Mammary epithelial cell (primary cell): ENCODE measurements at regions of chr9 and their contacts with region 1.

Region 1: GRCh38 chr9:113807173-113808061 is 68.7 kb upstream of the ZNF618 start:
- DNase-seq: peak; percentile 43
- H3K4me3 ChIP-seq: no peak overlapping the region
- H3K27ac ChIP-seq: no peak overlapping the region
- H3K4me1 ChIP-seq: peaks cover 4% of the 10 kb centered on the region
- H3K27me3 ChIP-seq: peaks cover 1% of the 10 kb centered on the region
- CTCF ChIP-seq: peak; percentile 90 to 91

Region 2: DNA sequence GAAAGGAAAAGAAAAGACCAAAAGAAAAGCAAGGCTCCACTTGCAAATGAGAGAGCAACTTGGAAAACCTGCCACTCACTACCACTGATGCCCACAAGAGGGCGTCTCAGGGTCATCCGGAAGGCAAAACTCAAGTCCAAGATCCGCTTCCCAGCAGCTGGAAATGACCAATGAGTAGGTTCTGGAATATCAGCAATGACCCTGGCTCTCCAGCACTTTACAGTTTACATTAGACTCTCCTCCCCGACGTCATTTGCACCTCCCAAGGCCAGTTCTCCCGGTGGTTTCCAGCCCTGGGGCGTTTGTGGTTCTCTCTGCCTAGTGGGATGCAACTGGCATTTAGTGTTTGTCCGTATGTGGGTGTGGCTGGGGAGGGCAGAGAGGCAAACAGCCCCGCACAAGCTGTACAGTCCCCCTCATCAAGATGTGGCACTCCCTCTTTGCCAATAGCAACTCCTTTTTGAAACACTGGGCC is 125.1 kb before region 1 on chr9:
- CTCF ChIA-PET with region 1: no interaction called
- dilution Hi-C with region 1: no loop called
- in situ Hi-C with region 1: no loop called
- intact Hi-C with region 1: loop called (anchors 5 kb)
- DNase-seq: peak; percentile 85
- H3K4me3 ChIP-seq: no peak overlapping the region
- H3K27ac ChIP-seq: no peak overlapping the region
- H3K4me1 ChIP-seq: peaks cover 16% of the 10 kb centered on the region
- H3K27me3 ChIP-seq: no peaks in the 10 kb centered on the region
- CTCF ChIP-seq: peak; percentile 93 to 95

Region 3: GRCh38 chr9:113756476-113757192 is 50.8 kb before region 1 on chr9:
- CTCF ChIA-PET with region 1: no interaction called
- dilution Hi-C with region 1: no loop called
- in situ Hi-C with region 1: no loop called
- intact Hi-C with region 1: no loop called
- DNase-seq: no peak
- H3K4me3 ChIP-seq: no peak overlapping the region
- H3K27ac ChIP-seq: no peak overlapping the region
- H3K4me1 ChIP-seq: no peaks in the 10 kb centered on the region
- H3K27me3 ChIP-seq: no peaks in the 10 kb centered on the region
- CTCF ChIP-seq: no peak

Region 4: GRCh38 chr9:113876151-113876992 is 69.0 kb after region 1 on chr9 and contains the start of gene ZNF618:
- CTCF ChIA-PET with region 1: no interaction called
- dilution Hi-C with region 1: no loop called
- in situ Hi-C with region 1: no loop called
- intact Hi-C with region 1: loop called (anchors 1 kb)
- DNase-seq: no peak
- H3K4me3 ChIP-seq: peak within 1 kb of the TSS; percentile 51 to 88 (median 87)
- H3K27ac ChIP-seq: peak within 1 kb of the TSS; percentile 72
- H3K4me1 ChIP-seq: peaks cover 26% of the 10 kb centered on the region
- H3K27me3 ChIP-seq: no peaks in the 10 kb centered on the region
- CTCF ChIP-seq: peak; percentile 23 to 43
- total RNA-seq, gene ZNF618: 18.0 to 19.6 TPM

Region 5: GRCh38 chr9:113913426-113914195 is 106.2 kb after region 1 on chr9:
- CTCF ChIA-PET with region 1: no interaction called
- dilution Hi-C with region 1: no loop called
- in situ Hi-C with region 1: no loop called
- intact Hi-C with region 1: no loop called
- DNase-seq: no peak
- H3K4me3 ChIP-seq: no peak overlapping the region
- H3K27ac ChIP-seq: no peak overlapping the region
- H3K4me1 ChIP-seq: peaks cover 3% of the 10 kb centered on the region
- H3K27me3 ChIP-seq: no peaks in the 10 kb centered on the region
- CTCF ChIP-seq: no peak

Region 6: DNA sequence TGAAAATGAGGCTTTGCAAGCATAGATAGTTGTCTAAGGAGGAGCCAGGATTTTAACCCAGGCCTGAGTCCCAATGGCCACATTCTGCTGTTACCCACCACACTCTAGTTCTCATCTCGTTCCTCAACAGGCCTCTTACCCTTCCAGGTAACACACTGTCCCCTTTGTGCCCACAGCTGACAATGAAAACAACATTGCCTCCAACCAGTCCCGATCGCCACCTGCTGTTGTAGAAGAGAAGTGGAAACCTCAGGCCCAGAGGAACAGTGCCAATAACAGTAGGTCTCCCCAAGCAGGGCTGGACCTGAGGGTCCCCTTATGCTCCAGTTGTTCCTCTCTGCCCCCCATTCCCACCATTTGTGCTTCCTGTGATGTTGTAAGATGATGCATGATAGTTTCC is 240.3 kb after region 1 on chr9:
- CTCF ChIA-PET with region 1: no interaction called
- dilution Hi-C with region 1: no loop called
- in situ Hi-C with region 1: no loop called
- intact Hi-C with region 1: loop called (anchors 1 kb)
- DNase-seq: no peak
- H3K4me3 ChIP-seq: no peak overlapping the region
- H3K27ac ChIP-seq: no peak overlapping the region
- H3K4me1 ChIP-seq: peaks cover 9% of the 10 kb centered on the region
- H3K27me3 ChIP-seq: no peaks in the 10 kb centered on the region
- CTCF ChIP-seq: peak; percentile 25 to 46

Region 7: GRCh38 chr9:114291064-114291474 is 483.7 kb after region 1 on chr9:
- CTCF ChIA-PET with region 1: no interaction called
- dilution Hi-C with region 1: no loop called
- in situ Hi-C with region 1: no loop called
- intact Hi-C with region 1: loop called (anchors 10 kb)
- DNase-seq: peak; percentile 50
- H3K4me3 ChIP-seq: no peak overlapping the region
- H3K27ac ChIP-seq: no peak overlapping the region
- H3K4me1 ChIP-seq: peaks cover 20% of the 10 kb centered on the region
- H3K27me3 ChIP-seq: no peaks in the 10 kb centered on the region
- CTCF ChIP-seq: peak; percentile 82 to 84